Psoas muscle (tissue), 8 donors: ENCODE measurements at regions of chr2 and their contacts with region 1.

Region 1: GRCh38 chr2:15591692-15592463 is at the start of gene DDX1:
- DNase-seq: peak; percentile 83 to 91
- ATAC-seq: peak; percentile 95 to 98 (median 96)
- H3K4me3 ChIP-seq: peak within 1 kb of the TSS; percentile 92
- H3K27ac ChIP-seq: peak within 1 kb of the TSS; percentile 94
- H3K4me1 ChIP-seq: peaks cover 28% of the 10 kb centered on the region
- H3K27me3 ChIP-seq: no peaks in the 10 kb centered on the region
- CTCF ChIP-seq: no peak
- total RNA-seq, gene DDX1: 116 to 143 (median 132) TPM

Region 2: DNA sequence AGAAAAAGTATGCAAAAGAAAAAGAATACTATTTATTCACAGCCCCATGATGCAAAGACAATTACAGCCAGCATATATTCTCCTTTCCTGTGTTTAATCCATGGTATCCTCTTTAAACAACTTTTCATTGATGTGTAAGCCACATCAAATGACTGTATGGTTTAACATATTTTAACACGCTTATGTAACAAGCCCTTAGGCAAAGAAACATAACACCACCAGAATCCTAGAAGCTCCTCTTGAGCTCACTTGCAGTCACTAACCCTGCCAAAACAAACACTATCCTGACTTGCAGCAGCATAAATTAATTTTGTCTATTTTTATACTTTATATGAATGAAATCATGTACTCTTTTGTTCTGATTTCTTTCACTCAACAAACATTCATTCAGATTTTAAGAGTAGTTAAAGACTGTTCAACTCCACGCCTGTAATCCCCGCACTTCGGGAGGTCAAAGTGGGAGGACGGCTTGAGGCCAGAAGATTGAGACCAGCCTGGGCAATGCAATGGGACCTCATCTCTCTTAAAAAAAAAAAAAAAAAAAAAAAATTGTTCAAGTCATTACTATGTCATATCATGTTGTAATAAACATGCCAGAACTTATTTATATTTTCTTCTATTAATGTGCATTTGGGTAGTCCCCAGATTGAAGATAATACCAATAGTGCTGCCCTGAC is 257.1 kb before region 1 on chr2:
- intact Hi-C with region 1: no loop called
- DNase-seq: no peak
- ATAC-seq: no peak
- H3K4me3 ChIP-seq: no peak overlapping the region
- H3K27ac ChIP-seq: no peak overlapping the region
- H3K4me1 ChIP-seq: no peaks in the 10 kb centered on the region
- H3K27me3 ChIP-seq: no peaks in the 10 kb centered on the region
- CTCF ChIP-seq: no peak

Region 3: GRCh38 chr2:15560988-15561573 is 30.8 kb before region 1 on chr2 and contains the start of gene NBAS:
- intact Hi-C with region 1: loop called in 1 of 2 experiments (anchors 1 kb)
- DNase-seq: peak; percentile 86 to 89
- ATAC-seq: peak; percentile 92 to 99 (median 96)
- H3K4me3 ChIP-seq: peak within 1 kb of the TSS; percentile 90
- H3K27ac ChIP-seq: peak within 1 kb of the TSS; percentile 78
- H3K4me1 ChIP-seq: peaks cover 26% of the 10 kb centered on the region
- H3K27me3 ChIP-seq: no peaks in the 10 kb centered on the region
- CTCF ChIP-seq: no peak
- total RNA-seq, gene NBAS: 27.0 to 52.8 (median 35.7) TPM